Endothelial cell of umbilical vein (primary cell): ENCODE measurements at regions of chr10 and their contacts with region 1.

Region 1: GRCh38 chr10:26860443-26861204 is at the start of gene ABI1:
- DNase-seq: peak; percentile 100
- H3K4me3 ChIP-seq: peak within 1 kb of the TSS; percentile 99
- H3K27ac ChIP-seq: peak within 1 kb of the TSS; percentile 78
- H3K4me1 ChIP-seq: peaks cover 13% of the 10 kb centered on the region
- H3K27me3 ChIP-seq: peaks cover 8 to 10% of the 10 kb centered on the region in 2 experiments
- CTCF ChIP-seq: no peak
- POLR2A ChIP-seq: peak; percentile 87
- total RNA-seq, gene ABI1: 53.6 and 58.8 TPM in 2 replicates

Region 2: DNA sequence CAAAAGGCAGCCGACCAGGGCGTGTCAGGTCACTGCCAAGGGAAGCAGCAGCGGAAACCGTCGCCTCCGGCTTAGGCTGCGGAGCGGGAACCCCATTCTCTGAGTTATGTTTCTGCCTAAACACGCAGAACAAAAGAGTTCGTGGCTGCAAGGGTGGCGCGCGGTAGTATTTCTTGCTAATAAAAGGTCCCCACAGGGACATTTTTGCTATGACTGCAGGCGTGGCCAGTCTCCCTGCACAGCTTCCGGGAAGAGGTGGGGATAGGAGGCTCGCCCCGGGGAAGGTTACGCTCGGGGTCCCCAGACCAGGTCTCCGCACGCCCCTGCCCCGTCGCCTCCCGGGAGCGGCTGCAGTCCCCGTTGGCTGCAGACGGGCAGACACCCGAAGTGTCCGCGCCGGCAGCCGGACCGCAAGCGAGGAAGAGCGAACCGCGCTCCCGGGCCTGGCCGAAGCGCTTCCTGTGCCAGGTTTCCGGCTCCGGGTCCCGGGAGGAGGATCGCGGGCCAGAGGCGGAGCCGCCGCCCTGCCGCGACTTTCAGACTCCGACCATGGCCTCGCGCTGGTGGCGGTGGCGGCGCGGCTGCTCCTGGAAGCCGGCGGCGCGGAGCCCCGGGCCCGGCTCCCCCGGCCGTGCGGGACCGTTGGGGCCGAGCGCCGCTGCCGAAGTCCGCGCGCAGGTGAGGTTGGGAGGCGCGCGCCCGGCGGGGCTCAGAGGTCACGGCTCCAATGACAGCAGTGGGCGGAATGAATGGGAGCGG is 163.3 kb before region 1 on chr10 and contains the start of gene PDSS1:
- CTCF ChIA-PET with region 1: interaction called, 4 read pairs
- POLR2A ChIA-PET with region 1: no interaction called
- dilution Hi-C with region 1: no loop called
- intact Hi-C with region 1: loop called (anchors 1 kb)
- DNase-seq: peak; percentile 69
- H3K4me3 ChIP-seq: peak within 1 kb of the TSS; percentile 64 to 91 (median 89)
- H3K27ac ChIP-seq: peak within 1 kb of the TSS; percentile 55
- H3K4me1 ChIP-seq: peaks cover 10% of the 10 kb centered on the region
- H3K27me3 ChIP-seq: no peaks in the 10 kb centered on the region
- CTCF ChIP-seq: no peak
- POLR2A ChIP-seq: peak; percentile 84
- total RNA-seq, gene PDSS1: 11.0 and 11.3 TPM in 2 replicates

Region 3: DNA sequence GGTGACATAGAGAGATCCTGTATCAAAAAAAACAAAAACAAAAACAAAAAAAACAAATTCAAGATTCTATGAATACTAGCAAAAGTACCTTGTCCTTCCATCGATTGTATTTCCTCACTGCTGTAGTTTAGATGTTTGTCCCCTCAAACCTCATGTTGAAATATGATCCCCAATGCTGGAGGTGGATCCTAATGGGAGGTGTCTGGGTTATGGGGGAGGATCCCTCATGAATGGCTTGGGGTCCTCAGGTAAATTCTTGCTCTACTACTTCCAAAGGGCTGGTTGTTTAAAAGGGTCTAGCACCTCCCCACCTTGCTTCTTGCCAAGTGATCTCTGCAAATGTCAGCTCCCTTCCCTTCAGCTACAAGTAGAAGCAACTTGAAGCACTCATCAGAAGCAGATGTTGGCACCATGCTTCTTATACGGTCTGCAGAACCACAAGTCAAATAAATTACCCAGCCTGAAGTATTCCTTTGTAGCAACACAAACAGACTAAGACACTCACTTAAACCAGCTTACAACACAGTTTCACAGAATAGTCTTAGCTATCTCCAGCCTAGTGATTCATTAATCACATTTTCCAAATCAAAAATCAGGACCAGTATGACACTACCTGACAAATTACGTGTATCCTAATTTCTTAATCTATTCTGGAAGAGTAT is 20.5 kb before region 1 on chr10:
- CTCF ChIA-PET with region 1: interaction called, 5 read pairs
- POLR2A ChIA-PET with region 1: no interaction called
- dilution Hi-C with region 1: no loop called
- intact Hi-C with region 1: loop called (anchors 2 kb)
- DNase-seq: no peak
- H3K4me3 ChIP-seq: no peak overlapping the region
- H3K27ac ChIP-seq: no peak overlapping the region
- H3K4me1 ChIP-seq: peaks cover 7% of the 10 kb centered on the region
- H3K27me3 ChIP-seq: no peaks in the 10 kb centered on the region
- CTCF ChIP-seq: no peak
- POLR2A ChIP-seq: no peak